Heart right ventricle (tissue), 16 donors: ENCODE measurements at regions of chr4 and their contacts with region 1.

Region 1: GRCh38 chr4:87838890-87839591 is 6.3 kb downstream of the MEPE start:
- DNase-seq: peak in 1 of 2 donors; percentile 28
- ATAC-seq: peak in 4 of 8 donors; percentile 61 to 67 (median 64)
- H3K4me3 ChIP-seq: no peak overlapping the region
- H3K27ac ChIP-seq: no peak overlapping the region
- H3K4me1 ChIP-seq: peaks cover 0 to 23% (median 8%) of the 10 kb centered on the region in 9 donors
- H3K27me3 ChIP-seq: no peaks in the 10 kb centered on the region
- CTCF ChIP-seq: peak; percentile 54 to 90 (median 78)

Region 2: GRCh38 chr4:87270144-87270543 is 568.9 kb before region 1 on chr4:
- intact Hi-C with region 1: loop called in 3 of 10 experiments (anchors 10 kb)
- DNase-seq: peak in 1 of 2 donors; percentile 12
- ATAC-seq: peak in 1 of 8 donors; percentile 76
- H3K4me3 ChIP-seq: no peak overlapping the region
- H3K27ac ChIP-seq: no peak overlapping the region
- H3K4me1 ChIP-seq: no peaks in the 10 kb centered on the region
- H3K27me3 ChIP-seq: no peaks in the 10 kb centered on the region
- CTCF ChIP-seq: peak; percentile 7 to 75 (median 53)

Region 3: GRCh38 chr4:87353592-87353991 is 485.4 kb before region 1 on chr4:
- intact Hi-C with region 1: loop called in 1 of 10 experiments (anchors 5 kb)
- DNase-seq: peak; percentile 27 to 63
- ATAC-seq: peak in 6 of 8 donors; percentile 61 to 93 (median 76)
- H3K4me3 ChIP-seq: no peak overlapping the region
- H3K27ac ChIP-seq: peak overlapping the region in 7 of 10 donors; percentile 14 to 75 (median 47)
- H3K4me1 ChIP-seq: peaks cover 0 to 19% (median 6%) of the 10 kb centered on the region in 9 donors
- H3K27me3 ChIP-seq: no peaks in the 10 kb centered on the region
- CTCF ChIP-seq: peak; percentile 46 to 82 (median 66)

Region 4: DNA sequence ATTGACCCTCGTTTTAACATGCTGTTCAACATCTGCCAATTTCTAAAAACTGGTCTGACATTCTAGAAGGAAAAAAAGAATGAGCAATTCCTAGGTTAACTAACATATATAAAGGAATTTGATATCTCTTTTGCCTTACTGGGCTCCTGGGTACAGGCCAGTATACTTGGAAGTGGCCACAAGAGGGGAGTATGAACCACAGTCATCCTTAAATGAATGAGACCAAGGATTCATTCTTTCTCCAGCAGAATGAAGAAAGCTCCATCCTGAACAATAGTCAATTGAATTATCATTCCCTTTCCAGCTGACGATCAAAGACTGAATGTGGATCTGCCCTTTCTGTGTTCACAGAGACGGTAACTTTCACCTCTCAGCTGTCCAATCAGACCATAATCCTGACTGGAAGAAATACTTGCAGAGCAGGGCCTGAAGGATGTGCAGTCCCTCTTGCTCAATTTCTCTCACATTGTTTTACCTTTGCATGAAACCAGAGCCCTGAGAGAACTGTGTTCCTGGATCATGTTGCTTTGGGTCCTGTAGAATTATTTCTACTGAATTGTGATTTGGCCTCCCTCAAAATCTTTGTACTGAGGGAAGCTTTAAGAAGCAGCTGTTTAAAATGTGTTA is 295.1 kb before region 1 on chr4:
- intact Hi-C with region 1: loop called in 5 of 10 experiments (anchors 5 to 10 kb)
- DNase-seq: peak in 1 of 2 donors; percentile 48
- ATAC-seq: peak in 7 of 8 donors; percentile 46 to 77 (median 65)
- H3K4me3 ChIP-seq: no peak overlapping the region
- H3K27ac ChIP-seq: peak overlapping the region in 3 of 10 donors; percentile 15 to 77 (median 20)
- H3K4me1 ChIP-seq: peaks cover 0 to 32% (median 5%) of the 10 kb centered on the region in 9 donors
- H3K27me3 ChIP-seq: no peaks in the 10 kb centered on the region
- CTCF ChIP-seq: peak in 8 of 9 donors; percentile 44 to 83 (median 65)

Region 5: GRCh38 chr4:87551361-87551760 is 287.7 kb before region 1 on chr4:
- intact Hi-C with region 1: loop called in 4 of 10 experiments (anchors 5 to 10 kb)
- DNase-seq: no peak
- ATAC-seq: no peak
- H3K4me3 ChIP-seq: no peak overlapping the region
- H3K27ac ChIP-seq: no peak overlapping the region
- H3K4me1 ChIP-seq: peaks cover 0 to 6% (median 0%) of the 10 kb centered on the region in 9 donors
- H3K27me3 ChIP-seq: no peaks in the 10 kb centered on the region
- CTCF ChIP-seq: no peak

Region 6: GRCh38 chr4:87559109-87559837 is 279.8 kb before region 1 on chr4:
- intact Hi-C with region 1: loop called in 2 of 10 experiments (anchors 5 to 10 kb)
- DNase-seq: no peak
- ATAC-seq: peak in 3 of 8 donors; percentile 30 to 66 (median 41)
- H3K4me3 ChIP-seq: no peak overlapping the region
- H3K27ac ChIP-seq: no peak overlapping the region
- H3K4me1 ChIP-seq: peaks cover 0 to 15% (median 5%) of the 10 kb centered on the region in 9 donors
- H3K27me3 ChIP-seq: no peaks in the 10 kb centered on the region
- CTCF ChIP-seq: no peak

Region 7: DNA sequence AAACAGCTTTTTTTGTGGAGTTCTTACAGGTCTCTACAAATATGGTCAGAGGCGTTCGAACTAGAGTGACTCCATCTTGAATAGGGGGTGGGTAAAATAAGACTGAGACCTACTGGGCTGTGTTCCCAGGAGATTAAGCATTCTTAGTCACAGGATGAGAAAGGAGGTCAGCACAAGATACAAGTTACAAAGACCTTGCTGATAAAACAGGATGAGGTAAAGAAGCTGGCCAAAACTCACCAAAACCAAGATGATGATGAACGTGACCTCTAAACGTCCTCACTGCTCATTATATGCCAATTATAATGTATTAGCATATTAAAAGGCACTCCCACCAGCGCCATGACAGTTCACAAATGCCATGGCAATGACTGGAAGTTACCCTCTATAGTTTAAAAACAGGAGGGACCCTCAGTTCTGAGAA is 93.7 kb after region 1 on chr4:
- intact Hi-C with region 1: no loop called
- DNase-seq: no peak
- ATAC-seq: no peak
- H3K4me3 ChIP-seq: no peak overlapping the region
- H3K27ac ChIP-seq: no peak overlapping the region
- H3K4me1 ChIP-seq: no peaks in the 10 kb centered on the region
- H3K27me3 ChIP-seq: no peaks in the 10 kb centered on the region
- CTCF ChIP-seq: no peak

Region 8: GRCh38 chr4:88007304-88008121 is 168.5 kb after region 1 on chr4 and contains the start of gene PKD2:
- intact Hi-C with region 1: no loop called
- DNase-seq: peak; percentile 89 to 91
- ATAC-seq: peak; percentile 94 to 98 (median 97)
- H3K4me3 ChIP-seq: peak within 1 kb of the TSS; percentile 73 to 92 (median 80)
- H3K27ac ChIP-seq: peak within 1 kb of the TSS; percentile 51 to 87 (median 83)
- H3K4me1 ChIP-seq: peaks cover 7 to 54% (median 35%) of the 10 kb centered on the region in 9 donors
- H3K27me3 ChIP-seq: no peaks in the 10 kb centered on the region
- CTCF ChIP-seq: no peak
- total RNA-seq, gene PKD2: 11.3 to 21.5 (median 14.5) TPM